ENCODE measurements at regions of chr6 and their contacts with region 1.

Region 1: DNA sequence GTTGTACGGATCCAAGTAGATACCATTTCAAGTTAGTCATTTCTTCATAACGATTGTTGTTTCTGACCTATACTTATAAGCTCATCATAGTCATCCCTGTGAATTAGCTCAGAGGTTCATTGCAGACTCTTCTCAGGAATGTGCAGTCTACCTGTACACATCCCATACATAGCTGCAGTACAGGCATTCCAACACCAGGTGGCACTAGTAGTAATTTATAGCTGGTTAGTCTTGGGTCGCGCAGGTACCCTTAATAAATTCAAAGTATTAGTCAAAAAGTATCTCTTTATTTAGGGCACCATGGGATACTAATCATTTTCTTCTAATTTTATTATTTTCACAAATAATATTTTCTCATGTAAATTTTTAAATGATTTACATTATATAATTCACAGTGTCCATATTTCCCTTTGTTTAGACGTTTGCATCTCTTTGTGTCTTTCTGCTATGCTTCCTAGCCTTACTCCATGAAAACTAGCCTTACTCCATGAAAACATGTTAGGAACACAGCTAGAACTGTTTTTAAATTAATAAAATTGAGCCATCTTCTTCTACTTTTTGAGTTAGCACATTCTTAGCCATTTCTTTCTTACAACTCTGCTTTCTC is 128.6 kb upstream of the FAM83B start:
- DNase-seq: peak; percentile 85
- H3K4me3 Mint-ChIP-seq: no peak overlapping the region
- H3K27ac Mint-ChIP-seq: no peak overlapping the region
- H3K4me1 Mint-ChIP-seq: no peaks in the 10 kb centered on the region
- H3K27me3 Mint-ChIP-seq: no peaks in the 10 kb centered on the region

Region 2: DNA sequence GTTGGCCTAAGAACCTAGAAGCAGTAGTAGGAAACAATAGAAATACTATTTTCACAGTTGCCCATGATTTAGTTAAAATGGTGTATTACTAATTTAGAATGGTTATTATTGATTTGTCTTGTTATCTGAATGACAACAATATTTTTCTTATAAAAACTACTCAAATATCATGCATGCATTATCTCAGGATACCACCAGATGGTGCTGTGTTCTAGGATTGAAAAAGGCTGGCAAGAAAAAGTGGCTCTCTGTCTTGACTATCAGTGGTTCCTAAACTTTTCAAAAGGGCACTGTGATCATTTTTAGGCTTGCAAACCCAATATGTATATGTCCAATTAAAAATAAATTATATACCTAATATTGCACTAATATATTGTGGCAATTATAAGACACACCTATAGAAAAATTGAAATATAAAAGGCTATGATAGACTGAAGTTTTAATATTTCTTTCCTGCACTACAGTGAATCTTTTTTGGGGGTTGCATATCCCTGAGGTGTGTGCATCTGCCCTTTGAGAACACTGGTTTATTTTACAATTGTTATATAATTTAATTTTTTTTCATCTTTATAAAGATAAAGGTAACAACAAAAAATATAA is 738.4 kb before region 1 on chr6:
- intact Hi-C with region 1: loop called (anchors 5 kb)
- DNase-seq: peak; percentile 71
- H3K4me3 Mint-ChIP-seq: no peak overlapping the region
- H3K27ac Mint-ChIP-seq: no peak overlapping the region
- H3K4me1 Mint-ChIP-seq: no peaks in the 10 kb centered on the region
- H3K27me3 Mint-ChIP-seq: peaks cover 3% of the 10 kb centered on the region

Region 3: GRCh38 chr6:55069132-55069781 is 351.3 kb after region 1 on chr6:
- intact Hi-C with region 1: loop called (anchors 5 kb)
- DNase-seq: no peak
- H3K4me3 Mint-ChIP-seq: no peak overlapping the region
- H3K27ac Mint-ChIP-seq: no peak overlapping the region
- H3K4me1 Mint-ChIP-seq: no peaks in the 10 kb centered on the region
- H3K27me3 Mint-ChIP-seq: no peaks in the 10 kb centered on the region

Region 4: DNA sequence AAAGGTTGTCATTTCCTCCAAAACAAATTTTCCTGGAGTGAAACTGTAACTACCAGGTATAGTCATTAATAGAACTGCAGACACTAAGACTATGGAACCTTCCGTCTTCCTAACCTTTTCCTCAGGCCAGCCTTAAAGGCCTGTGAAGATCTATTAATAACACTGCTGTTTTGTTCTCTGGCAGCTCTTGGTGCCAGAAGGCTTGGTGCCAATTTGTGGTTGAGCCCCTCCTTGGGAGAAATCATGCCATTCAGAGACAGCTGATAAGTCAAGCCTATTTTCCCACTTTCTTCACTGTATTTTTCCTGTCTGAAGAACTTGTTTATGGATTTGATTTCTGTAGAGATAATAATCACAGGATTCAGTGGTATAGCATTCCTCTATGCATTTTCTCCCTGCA is 521.1 kb after region 1 on chr6:
- intact Hi-C with region 1: loop called (anchors 2 kb)
- DNase-seq: no peak
- H3K4me3 Mint-ChIP-seq: no peak overlapping the region
- H3K27ac Mint-ChIP-seq: no peak overlapping the region
- H3K4me1 Mint-ChIP-seq: no peaks in the 10 kb centered on the region
- H3K27me3 Mint-ChIP-seq: no peaks in the 10 kb centered on the region

Measured in activated CD4-positive, alpha-beta T cell treated with anti-CD3 and anti-CD28 coated beads, Interleukin-2, amount 10 ng/mL, durations not matched to agents 24 days and 14 days (primary cell).